ENCODE measurements at regions of chr5 and their contacts with region 1.

Region 1: DNA sequence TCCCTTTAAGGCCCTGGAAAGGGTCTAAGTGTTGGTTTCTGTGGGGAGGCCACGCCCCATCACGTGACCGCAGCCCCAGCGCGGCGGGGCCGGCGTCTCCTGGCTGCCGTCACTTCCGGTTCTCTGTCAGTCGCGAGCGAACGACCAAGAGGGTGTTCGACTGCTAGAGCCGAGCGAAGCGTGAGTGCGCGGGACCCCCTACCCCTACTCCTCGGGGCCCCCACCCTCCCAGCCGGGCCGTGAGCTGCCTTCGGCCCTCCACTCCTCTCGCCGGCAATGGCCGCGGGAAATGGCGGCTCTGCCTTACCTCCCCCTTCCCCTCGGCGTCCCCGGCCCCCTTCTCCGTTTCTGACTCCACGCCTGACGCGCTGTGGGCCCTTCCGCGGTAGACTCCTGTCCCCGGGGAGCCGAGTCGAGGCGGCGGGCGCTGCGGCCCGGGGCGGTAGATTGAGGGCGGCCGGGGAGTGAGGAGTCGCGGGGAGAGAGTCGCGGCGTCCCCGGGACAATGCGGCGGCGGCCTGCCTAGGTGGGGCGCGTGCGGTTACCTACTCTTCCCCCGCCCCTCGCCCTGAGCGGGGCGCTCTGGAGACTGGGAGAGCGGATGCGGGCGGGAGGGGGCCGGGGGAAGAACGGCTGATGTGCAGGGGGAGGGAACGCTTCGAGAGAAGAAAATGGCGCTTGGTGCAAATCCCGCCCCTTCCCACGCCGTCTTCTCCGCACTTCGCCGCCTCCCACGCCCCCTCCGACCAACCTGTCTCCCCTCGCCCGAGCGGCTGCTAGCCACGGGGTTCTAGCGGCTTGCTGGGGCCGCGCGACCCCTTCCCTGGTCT is at the start of gene SUB1:
- DNase-seq: peak; percentile 92 to 95 (median 93)
- H3K4me3 ChIP-seq: peak within 1 kb of the TSS; percentile 89 to 92
- H3K4me3 Mint-ChIP-seq: peak within 1 kb of the TSS; percentile 90 to 99 (median 96)
- H3K27ac ChIP-seq: peak within 1 kb of the TSS; percentile 97
- H3K27ac Mint-ChIP-seq: peak within 1 kb of the TSS; percentile 90 to 99 (median 97)
- H3K4me1 ChIP-seq: peaks cover 67% of the 10 kb centered on the region
- H3K4me1 Mint-ChIP-seq: peaks cover 46 to 82% (median 61%) of the 10 kb centered on the region in 4 donors
- H3K27me3 ChIP-seq: no peaks in the 10 kb centered on the region
- H3K27me3 Mint-ChIP-seq: no peaks in the 10 kb centered on the region
- total RNA-seq, gene SUB1: 204 to 214 TPM

Region 2: GRCh38 chr5:32232441-32233219 is 353.0 kb before region 1 on chr5:
- CTCF ChIA-PET with region 1: interaction called, 35 read pairs
- POLR2A ChIA-PET with region 1: no interaction called
- intact Hi-C with region 1: no loop called
- DNase-seq: peak; percentile 65 to 69 (median 67)
- H3K4me3 ChIP-seq: no peak overlapping the region
- H3K4me3 Mint-ChIP-seq: no peak overlapping the region
- H3K27ac ChIP-seq: no peak overlapping the region
- H3K27ac Mint-ChIP-seq: peak overlapping the region in 5 of 7 donors; percentile 24 to 89 (median 73)
- H3K4me1 ChIP-seq: no peaks in the 10 kb centered on the region
- H3K4me1 Mint-ChIP-seq: peaks cover 0 to 7% (median 4%) of the 10 kb centered on the region in 4 donors
- H3K27me3 ChIP-seq: no peaks in the 10 kb centered on the region
- H3K27me3 Mint-ChIP-seq: no peaks in the 10 kb centered on the region

Region 3: DNA sequence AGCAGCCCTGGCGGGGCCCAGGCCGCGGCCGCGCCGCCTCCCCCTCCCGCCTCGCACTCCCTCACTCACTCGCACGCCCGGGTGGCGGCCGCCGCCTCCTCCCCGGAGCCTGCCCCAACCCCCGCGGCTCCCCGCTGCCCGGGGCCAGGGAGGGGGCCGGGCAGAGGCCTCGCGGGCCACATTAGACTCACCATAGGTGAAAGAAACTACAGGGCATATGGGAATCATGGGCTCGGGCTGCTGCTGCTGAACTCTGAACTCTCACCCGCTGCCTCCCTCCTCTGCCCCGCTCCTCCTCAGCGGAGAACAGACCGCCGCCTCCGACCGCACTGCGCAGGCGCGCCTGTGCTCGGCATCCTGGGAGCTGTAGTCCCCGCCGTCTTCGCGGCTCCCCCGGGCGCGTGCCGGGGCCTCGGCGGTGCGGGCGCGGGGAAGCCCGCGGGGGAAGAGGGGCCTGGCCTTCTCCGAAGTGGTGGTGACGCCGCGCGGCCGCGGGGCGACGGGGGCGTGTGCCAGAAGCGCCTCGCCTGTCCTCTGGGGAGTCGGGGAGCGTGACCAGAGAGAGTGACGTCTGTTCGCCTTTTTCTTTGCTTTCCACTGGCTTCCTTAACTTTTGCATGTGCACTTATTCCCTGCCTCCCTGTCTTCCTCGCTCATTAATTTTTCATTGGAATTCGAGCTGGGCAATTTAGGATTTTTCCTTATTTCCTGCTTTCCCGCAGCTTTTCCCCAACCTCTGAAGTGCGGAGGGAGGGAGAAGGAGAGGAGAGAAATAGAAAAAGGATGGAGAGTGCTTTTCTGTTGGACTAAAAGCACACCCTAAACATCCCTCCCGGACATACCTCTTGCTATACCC is 141.0 kb before region 1 on chr5 and contains the start of gene ZFR:
- CTCF ChIA-PET with region 1: interaction called, 9 read pairs
- POLR2A ChIA-PET with region 1: interaction called, 15 read pairs
- intact Hi-C with region 1: loop called (anchors 1 kb)
- DNase-seq: peak; percentile 93 to 95 (median 95)
- H3K4me3 ChIP-seq: peak within 1 kb of the TSS; percentile 53 to 88
- H3K4me3 Mint-ChIP-seq: peak within 1 kb of the TSS; percentile 93 to 97 (median 94)
- H3K27ac ChIP-seq: peak within 1 kb of the TSS; percentile 90
- H3K27ac Mint-ChIP-seq: peak within 1 kb of the TSS; percentile 91 to 97 (median 96)
- H3K4me1 ChIP-seq: peaks cover 43% of the 10 kb centered on the region
- H3K4me1 Mint-ChIP-seq: peaks cover 19 to 40% (median 30%) of the 10 kb centered on the region in 4 donors
- H3K27me3 ChIP-seq: no peaks in the 10 kb centered on the region
- H3K27me3 Mint-ChIP-seq: no peaks in the 10 kb centered on the region
- total RNA-seq, gene ZFR: 60.1 to 65.4 TPM

Region 4: DNA sequence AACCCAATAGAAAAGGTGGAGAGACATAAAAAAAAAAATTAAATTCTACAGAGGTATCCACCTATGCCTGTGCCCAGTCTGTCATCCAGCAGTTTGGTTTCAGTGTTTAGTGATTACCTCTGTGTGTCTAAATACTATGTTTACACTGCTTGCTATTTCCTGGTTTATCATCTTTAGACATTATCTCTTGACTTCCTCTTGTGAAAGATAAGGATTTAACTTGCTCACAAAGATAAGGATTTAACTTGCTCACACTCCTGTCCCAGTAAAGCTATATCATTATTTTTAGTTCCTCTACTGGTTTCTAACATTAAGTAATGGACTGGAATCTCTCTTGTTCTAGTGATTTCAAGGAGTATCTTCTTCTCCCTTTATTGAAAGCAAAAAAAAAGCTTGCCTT is 87.2 kb before region 1 on chr5:
- CTCF ChIA-PET with region 1: interaction called, 37 read pairs
- POLR2A ChIA-PET with region 1: interaction called, 4 read pairs
- intact Hi-C with region 1: no loop called
- DNase-seq: no peak
- H3K4me3 ChIP-seq: no peak overlapping the region
- H3K4me3 Mint-ChIP-seq: no peak overlapping the region
- H3K27ac ChIP-seq: no peak overlapping the region
- H3K27ac Mint-ChIP-seq: no peak overlapping the region
- H3K4me1 ChIP-seq: no peaks in the 10 kb centered on the region
- H3K4me1 Mint-ChIP-seq: peaks cover 6 to 7% (median 6%) of the 10 kb centered on the region in 4 donors
- H3K27me3 ChIP-seq: no peaks in the 10 kb centered on the region
- H3K27me3 Mint-ChIP-seq: peaks cover 0 to 3% of the 10 kb centered on the region in 2 donors

Region 5: DNA sequence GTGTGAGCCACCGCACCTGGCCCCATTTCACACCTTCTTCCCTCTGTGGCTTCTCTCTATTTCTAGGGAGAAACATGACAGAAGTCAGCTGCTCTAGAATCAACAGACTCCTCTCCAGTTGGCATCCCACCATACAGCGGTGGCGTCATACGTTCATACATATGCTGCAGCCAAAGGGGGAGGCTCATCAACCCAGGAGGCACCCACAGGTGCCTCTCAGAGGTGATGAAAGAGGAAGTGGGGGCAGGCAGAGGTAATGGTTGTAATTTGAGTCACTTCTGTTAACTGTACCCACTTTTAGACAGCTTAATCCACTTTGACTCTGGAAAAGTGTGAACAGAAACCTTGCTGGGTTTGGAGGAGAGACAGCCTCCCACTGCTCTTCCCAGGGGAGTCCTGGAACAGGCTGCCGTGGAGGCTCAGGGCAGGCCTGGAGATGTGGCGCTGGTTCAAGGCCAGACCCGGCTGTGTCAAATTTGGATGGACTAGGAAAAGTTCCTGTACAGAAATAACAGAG is 47.6 kb before region 1 on chr5:
- CTCF ChIA-PET with region 1: interaction called, 39 read pairs
- POLR2A ChIA-PET with region 1: interaction called, 9 read pairs
- intact Hi-C with region 1: no loop called
- DNase-seq: peak; percentile 27 to 75 (median 33)
- H3K4me3 ChIP-seq: no peak overlapping the region
- H3K4me3 Mint-ChIP-seq: peak overlapping the region in 6 of 8 donors; percentile 17 to 70 (median 55)
- H3K27ac ChIP-seq: no peak overlapping the region
- H3K27ac Mint-ChIP-seq: peak overlapping the region; percentile 10 to 93 (median 87)
- H3K4me1 ChIP-seq: peaks cover 59% of the 10 kb centered on the region
- H3K4me1 Mint-ChIP-seq: peaks cover 36 to 76% (median 54%) of the 10 kb centered on the region in 4 donors
- H3K27me3 ChIP-seq: no peaks in the 10 kb centered on the region
- H3K27me3 Mint-ChIP-seq: no peaks in the 10 kb centered on the region

Region 6: DNA sequence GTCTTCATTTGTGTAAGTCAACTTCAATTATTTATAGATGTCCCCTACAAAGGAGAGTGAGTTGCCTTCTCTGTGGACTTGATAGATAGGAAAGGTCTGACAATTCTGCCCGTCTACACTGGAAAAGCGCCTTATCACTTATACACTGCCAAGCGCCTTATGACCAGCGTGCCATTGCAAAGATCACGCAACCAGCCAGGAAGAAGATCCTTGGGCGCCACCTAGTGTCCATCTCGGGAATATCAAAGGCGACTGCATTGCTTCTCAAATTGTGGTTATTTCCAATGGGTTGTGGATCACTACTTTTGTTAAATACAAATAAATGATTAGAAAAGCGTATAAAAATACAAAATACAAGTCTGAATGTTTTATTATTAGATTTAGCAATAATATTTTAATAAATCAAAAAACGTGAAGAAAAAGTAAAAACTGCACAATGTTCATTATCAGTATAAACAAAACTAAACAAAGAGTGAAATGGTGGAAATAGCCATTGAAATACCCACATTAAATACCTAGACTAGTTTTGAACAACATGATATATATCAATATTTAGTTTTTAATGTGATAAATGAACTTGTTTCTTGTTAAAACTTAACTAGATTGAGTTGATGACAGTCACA is 27.5 kb after region 1 on chr5:
- CTCF ChIA-PET with region 1: interaction called, 13 read pairs
- POLR2A ChIA-PET with region 1: no interaction called
- intact Hi-C with region 1: loop called (anchors 2 kb)
- DNase-seq: peak; percentile 72 to 79 (median 76)
- H3K4me3 ChIP-seq: no peak overlapping the region
- H3K4me3 Mint-ChIP-seq: no peak overlapping the region
- H3K27ac ChIP-seq: no peak overlapping the region
- H3K27ac Mint-ChIP-seq: peak overlapping the region in 2 of 7 donors; percentile 7 to 65
- H3K4me1 ChIP-seq: no peaks in the 10 kb centered on the region
- H3K4me1 Mint-ChIP-seq: peaks cover 2 to 24% (median 14%) of the 10 kb centered on the region in 4 donors
- H3K27me3 ChIP-seq: no peaks in the 10 kb centered on the region
- H3K27me3 Mint-ChIP-seq: no peaks in the 10 kb centered on the region

Region 7: GRCh38 chr5:32794086-32794485 is 208.4 kb after region 1 on chr5:
- CTCF ChIA-PET with region 1: no interaction called
- POLR2A ChIA-PET with region 1: no interaction called
- intact Hi-C with region 1: no loop called
- DNase-seq: no peak
- H3K4me3 ChIP-seq: no peak overlapping the region
- H3K4me3 Mint-ChIP-seq: no peak overlapping the region
- H3K27ac ChIP-seq: no peak overlapping the region
- H3K27ac Mint-ChIP-seq: no peak overlapping the region
- H3K4me1 ChIP-seq: no peaks in the 10 kb centered on the region
- H3K4me1 Mint-ChIP-seq: no peaks in the 10 kb centered on the region
- H3K27me3 ChIP-seq: no peaks in the 10 kb centered on the region
- H3K27me3 Mint-ChIP-seq: peaks cover 0 to 1% of the 10 kb centered on the region in 2 donors

Region 8: DNA sequence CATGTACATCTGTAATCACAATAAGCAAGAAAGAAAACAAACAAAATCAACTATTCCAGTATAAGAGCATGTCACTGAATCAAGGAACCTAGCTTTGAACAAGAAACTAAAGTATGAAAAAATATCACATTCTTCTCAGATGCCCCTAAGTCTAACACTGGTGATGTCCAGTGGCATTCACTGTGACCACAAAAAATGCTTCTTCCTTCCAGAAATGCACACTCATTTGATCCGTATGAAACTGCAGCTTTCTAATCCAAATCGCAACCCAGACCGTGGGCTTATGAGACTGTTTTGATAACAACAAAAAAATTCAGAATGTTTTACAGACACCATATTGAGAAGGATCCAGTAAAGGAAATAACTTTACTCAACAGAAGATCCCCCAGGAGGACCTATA is 535.0 kb after region 1 on chr5:
- CTCF ChIA-PET with region 1: no interaction called
- POLR2A ChIA-PET with region 1: no interaction called
- intact Hi-C with region 1: no loop called
- DNase-seq: no peak
- H3K4me3 ChIP-seq: no peak overlapping the region
- H3K4me3 Mint-ChIP-seq: no peak overlapping the region
- H3K27ac ChIP-seq: no peak overlapping the region
- H3K27ac Mint-ChIP-seq: no peak overlapping the region
- H3K4me1 ChIP-seq: no peaks in the 10 kb centered on the region
- H3K4me1 Mint-ChIP-seq: no peaks in the 10 kb centered on the region
- H3K27me3 ChIP-seq: no peaks in the 10 kb centered on the region
- H3K27me3 Mint-ChIP-seq: no peaks in the 10 kb centered on the region